Activated CD8-positive, alpha-beta T cell treated with anti-CD3 and anti-CD28 coated beads, Interleukin-2, amount 10 ng/mL, durations not matched to agents 7 days and 5 days (primary cell): ENCODE measurements at regions of chr19 and their contacts with region 1.

Region 1: DNA sequence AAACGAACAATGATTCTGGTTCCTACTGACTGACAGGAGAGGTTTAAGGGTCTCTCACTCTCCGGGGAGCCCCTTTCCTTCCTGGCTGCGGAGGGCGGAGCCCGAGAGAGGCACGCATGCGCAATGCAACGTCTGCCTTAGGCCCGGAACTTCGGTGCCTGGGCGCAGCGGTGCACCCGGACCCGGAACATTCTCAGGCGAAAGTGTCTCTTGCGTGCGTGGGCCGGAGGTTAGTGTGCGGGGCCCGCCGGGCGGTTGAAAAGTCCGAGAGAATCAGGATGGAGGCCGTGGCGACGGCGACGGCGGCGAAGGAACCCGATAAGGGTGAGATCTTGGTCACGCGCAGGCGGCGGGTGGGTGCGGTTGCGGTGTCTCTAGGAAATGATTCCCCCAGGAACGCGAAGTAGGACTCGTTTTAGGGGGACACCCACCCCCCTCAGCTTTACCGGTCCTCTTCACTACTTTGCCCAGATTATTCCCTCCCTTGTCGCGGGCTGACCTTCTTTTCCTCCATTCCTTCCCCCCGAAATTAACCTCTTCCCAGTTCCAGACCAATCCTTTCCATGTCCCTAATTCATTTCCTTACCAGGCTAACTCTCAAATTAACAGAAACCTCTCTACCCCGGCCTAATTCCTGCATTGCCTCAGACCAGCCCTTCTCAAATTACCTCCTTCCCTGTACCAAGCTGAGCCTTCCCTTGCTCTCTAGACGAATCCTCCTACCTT is at the start of gene CCDC97:
- DNase-seq: peak; percentile 91
- ATAC-seq: peak; percentile 74
- H3K4me3 Mint-ChIP-seq: peak within 1 kb of the TSS; percentile 96
- H3K27ac Mint-ChIP-seq: peak within 1 kb of the TSS; percentile 98
- H3K4me1 Mint-ChIP-seq: peaks cover 65% of the 10 kb centered on the region
- H3K27me3 Mint-ChIP-seq: no peaks in the 10 kb centered on the region
- total RNA-seq, gene CCDC97: 33.5 to 36.1 TPM

Region 2: GRCh38 chr19:41233748-41234240 is 76.4 kb before region 1 on chr19:
- CTCF ChIA-PET with region 1: no interaction called
- POLR2A ChIA-PET with region 1: no interaction called
- DNase-seq: no peak
- ATAC-seq: no peak
- H3K4me3 Mint-ChIP-seq: no peak overlapping the region
- H3K27ac Mint-ChIP-seq: no peak overlapping the region
- H3K4me1 Mint-ChIP-seq: no peaks in the 10 kb centered on the region
- H3K27me3 Mint-ChIP-seq: no peaks in the 10 kb centered on the region

Region 3: GRCh38 chr19:41263850-41264580 is 46.2 kb before region 1 on chr19 and contains the start of gene HNRNPUL1:
- CTCF ChIA-PET with region 1: interaction called, 138 read pairs
- POLR2A ChIA-PET with region 1: interaction called, 105 read pairs
- DNase-seq: peak; percentile 99
- ATAC-seq: peak; percentile 75
- H3K4me3 Mint-ChIP-seq: peak within 1 kb of the TSS; percentile 82
- H3K27ac Mint-ChIP-seq: peak within 1 kb of the TSS; percentile 99
- H3K4me1 Mint-ChIP-seq: peaks cover 44% of the 10 kb centered on the region
- H3K27me3 Mint-ChIP-seq: peaks cover 2% of the 10 kb centered on the region
- total RNA-seq, gene HNRNPUL1: 332 to 340 TPM

Region 4: GRCh38 chr19:41298348-41298964 is 11.7 kb before region 1 on chr19:
- CTCF ChIA-PET with region 1: interaction called, 28 read pairs
- POLR2A ChIA-PET with region 1: interaction called, 26 read pairs
- DNase-seq: peak; percentile 51
- ATAC-seq: peak; percentile 51
- H3K4me3 Mint-ChIP-seq: no peak overlapping the region
- H3K27ac Mint-ChIP-seq: peak overlapping the region; percentile 80
- H3K4me1 Mint-ChIP-seq: peaks cover 91% of the 10 kb centered on the region
- H3K27me3 Mint-ChIP-seq: no peaks in the 10 kb centered on the region

Region 5: DNA sequence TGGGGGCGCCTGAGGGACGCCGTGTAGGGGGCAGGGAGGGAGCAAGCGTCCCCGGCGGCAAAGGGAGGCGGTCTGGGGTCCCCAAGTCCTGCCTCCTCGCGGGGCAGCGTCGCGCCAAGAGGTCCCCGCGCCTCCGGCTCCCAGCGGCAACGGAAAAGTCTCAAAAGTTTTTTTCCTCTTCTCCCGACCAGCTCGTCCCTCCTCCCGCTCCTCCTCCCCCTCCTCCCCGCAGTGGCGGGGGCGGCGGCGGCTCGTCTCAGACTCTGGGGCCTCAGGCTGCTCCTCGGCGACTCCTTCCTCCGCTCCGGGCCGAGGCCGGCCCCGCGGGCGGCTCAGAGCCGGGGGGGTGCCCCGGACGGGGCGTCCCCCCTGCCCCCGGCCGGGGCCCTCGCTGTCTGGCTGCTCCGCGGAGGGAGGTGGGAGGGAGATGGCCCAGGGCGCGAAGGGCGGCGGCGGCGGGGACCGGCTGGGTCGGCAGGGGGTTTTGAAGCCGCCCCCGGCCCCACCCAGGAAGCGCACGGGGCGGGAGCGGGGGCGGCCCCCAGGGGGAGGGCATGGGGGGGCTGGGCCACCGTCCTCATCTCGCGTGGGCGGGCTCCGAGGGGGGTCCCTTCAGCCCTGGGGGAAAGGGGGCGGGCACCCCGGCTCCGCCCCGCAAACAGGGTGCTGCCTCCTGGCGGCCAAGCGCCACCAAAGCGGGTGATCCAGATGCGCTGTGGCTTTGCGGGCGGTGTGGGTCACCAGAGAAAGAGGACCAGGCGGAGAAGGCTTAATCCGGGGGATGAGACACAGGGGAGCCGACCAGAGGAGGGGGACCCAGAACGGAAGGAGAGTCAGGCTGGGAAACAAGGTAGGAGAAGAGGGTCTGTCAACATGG is 43.5 kb after region 1 on chr19 and contains the start of gene TGFB1:
- CTCF ChIA-PET with region 1: interaction called, 12 read pairs
- POLR2A ChIA-PET with region 1: interaction called, 6 read pairs
- DNase-seq: peak; percentile 95
- ATAC-seq: peak; percentile 54
- H3K4me3 Mint-ChIP-seq: peak within 1 kb of the TSS; percentile 90
- H3K27ac Mint-ChIP-seq: peak within 1 kb of the TSS; percentile 98
- H3K4me1 Mint-ChIP-seq: peaks cover 66% of the 10 kb centered on the region
- H3K27me3 Mint-ChIP-seq: no peaks in the 10 kb centered on the region
- total RNA-seq, gene TGFB1: 210 to 231 TPM

Region 6: DNA sequence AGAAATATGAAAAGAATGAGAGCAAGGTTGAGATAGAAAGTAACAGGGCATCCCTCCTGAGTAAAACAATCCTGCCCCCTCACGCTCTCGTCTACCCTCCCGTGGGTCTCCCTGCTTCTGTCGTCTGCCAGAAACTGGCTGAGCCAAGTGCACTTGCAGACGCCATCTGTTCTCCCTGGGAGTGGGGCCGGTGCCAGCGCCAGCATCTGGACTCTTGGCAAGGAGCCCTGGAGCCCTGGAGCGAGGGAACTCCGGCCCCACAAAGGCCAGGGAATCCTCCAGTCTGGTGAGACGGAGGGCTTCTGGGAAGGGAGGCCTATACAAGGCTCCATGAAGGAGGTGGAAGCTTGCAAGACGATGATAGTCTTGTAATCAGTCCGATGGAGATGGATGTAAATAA is 63.8 kb after region 1 on chr19:
- CTCF ChIA-PET with region 1: no interaction called
- POLR2A ChIA-PET with region 1: no interaction called
- DNase-seq: no peak
- ATAC-seq: no peak
- H3K4me3 Mint-ChIP-seq: no peak overlapping the region
- H3K27ac Mint-ChIP-seq: no peak overlapping the region
- H3K4me1 Mint-ChIP-seq: peaks cover 22% of the 10 kb centered on the region
- H3K27me3 Mint-ChIP-seq: no peaks in the 10 kb centered on the region

Region 7: DNA sequence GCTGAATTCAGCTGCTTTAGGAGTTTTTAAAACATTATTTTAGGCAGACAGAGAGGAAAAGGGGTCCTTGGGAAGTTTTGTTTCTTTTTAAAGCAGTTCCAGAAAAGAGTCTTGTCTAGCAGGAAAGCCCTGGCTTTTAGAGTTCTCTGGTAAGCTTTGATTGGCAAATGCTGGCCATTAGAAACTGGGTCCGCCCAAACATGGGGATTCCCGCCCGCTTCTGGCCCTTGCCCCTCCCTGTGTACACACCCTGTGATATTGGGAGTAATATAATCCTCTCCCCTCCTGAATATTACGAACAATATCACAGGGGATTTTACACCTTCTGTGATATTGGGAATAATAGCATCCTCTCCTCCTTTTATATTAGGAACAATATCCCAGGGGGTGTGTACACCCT is 191.7 kb after region 1 on chr19:
- CTCF ChIA-PET with region 1: no interaction called
- POLR2A ChIA-PET with region 1: no interaction called
- DNase-seq: no peak
- ATAC-seq: no peak
- H3K4me3 Mint-ChIP-seq: no peak overlapping the region
- H3K27ac Mint-ChIP-seq: no peak overlapping the region
- H3K4me1 Mint-ChIP-seq: no peaks in the 10 kb centered on the region
- H3K27me3 Mint-ChIP-seq: peaks cover 24% of the 10 kb centered on the region